ENCODE measurements at regions of chr9 and their contacts with region 1.

Region 1: DNA sequence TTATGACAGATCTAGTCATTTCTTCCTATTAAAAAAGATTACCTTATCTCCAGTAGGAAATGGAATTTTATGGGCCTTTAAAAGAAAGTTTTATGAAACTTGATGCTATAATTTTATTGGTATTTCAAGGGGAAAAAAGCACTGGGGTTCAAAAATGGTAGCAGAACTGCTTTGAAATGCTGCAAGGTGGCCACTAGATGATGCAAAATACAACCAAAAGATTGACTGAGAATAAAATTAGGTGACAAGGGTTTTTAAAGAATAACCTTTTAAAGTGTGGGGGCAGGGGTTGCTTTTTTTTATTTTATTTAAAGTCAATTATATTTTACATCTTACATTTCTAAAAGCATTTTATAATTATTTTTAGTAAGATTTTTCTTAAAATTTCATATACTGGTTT is 61.7 kb downstream of the KLF9 start:
- DNase-seq: peak; percentile 35
- H3K4me3 ChIP-seq: no peak overlapping the region
- H3K27ac ChIP-seq: no peak overlapping the region
- H3K4me1 ChIP-seq: peaks cover 5% of the 10 kb centered on the region; the same call in 1 of the 2 replicates
- H3K27me3 ChIP-seq: no peaks in the 10 kb centered on the region

Region 2: GRCh38 chr9:70451765-70452164 is 99.0 kb after region 1 on chr9:
- in situ Hi-C with region 1: no loop called
- DNase-seq: no peak
- H3K4me3 ChIP-seq: no peak overlapping the region
- H3K27ac ChIP-seq: no peak overlapping the region
- H3K4me1 ChIP-seq: no peaks in the 10 kb centered on the region
- H3K27me3 ChIP-seq: no peaks in the 10 kb centered on the region

Region 3: GRCh38 chr9:70563431-70564204 is 210.8 kb after region 1 on chr9:
- in situ Hi-C with region 1: no loop called
- DNase-seq: peak; percentile 72
- H3K4me3 ChIP-seq: peak overlapping the region; percentile 34
- H3K27ac ChIP-seq: peak overlapping the region; percentile 92
- H3K4me1 ChIP-seq: peaks cover 16% of the 10 kb centered on the region
- H3K27me3 ChIP-seq: no peaks in the 10 kb centered on the region

Region 4: GRCh38 chr9:70602321-70603019 is 249.7 kb after region 1 on chr9:
- in situ Hi-C with region 1: loop called (anchors 10 kb)
- DNase-seq: peak; percentile 89
- H3K4me3 ChIP-seq: peak overlapping the region; percentile 61
- H3K27ac ChIP-seq: peak overlapping the region; percentile 100
- H3K4me1 ChIP-seq: peaks cover 25% of the 10 kb centered on the region
- H3K27me3 ChIP-seq: no peaks in the 10 kb centered on the region

Measured in GM23248 (cell line).